Naive thymus-derived CD4-positive, alpha-beta T cell (primary cell): ENCODE measurements at regions of chr12 and their contacts with region 1.

Region 1: GRCh38 chr12:107356266-107356936 is 263.1 kb upstream of the CRY1 start:
- DNase-seq: no peak
- ATAC-seq: no peak
- H3K4me3 ChIP-seq: no peak overlapping the region
- H3K4me3 Mint-ChIP-seq: no peak overlapping the region
- H3K27ac ChIP-seq: no peak overlapping the region
- H3K27ac Mint-ChIP-seq: no peak overlapping the region
- H3K4me1 ChIP-seq: peaks cover 14 to 29% of the 10 kb centered on the region in 2 donors
- H3K4me1 Mint-ChIP-seq: peaks cover 31 to 72% (median 63%) of the 10 kb centered on the region in 7 donors
- H3K27me3 ChIP-seq: no peaks in the 10 kb centered on the region
- H3K27me3 Mint-ChIP-seq: no peaks in the 10 kb centered on the region

Region 2: DNA sequence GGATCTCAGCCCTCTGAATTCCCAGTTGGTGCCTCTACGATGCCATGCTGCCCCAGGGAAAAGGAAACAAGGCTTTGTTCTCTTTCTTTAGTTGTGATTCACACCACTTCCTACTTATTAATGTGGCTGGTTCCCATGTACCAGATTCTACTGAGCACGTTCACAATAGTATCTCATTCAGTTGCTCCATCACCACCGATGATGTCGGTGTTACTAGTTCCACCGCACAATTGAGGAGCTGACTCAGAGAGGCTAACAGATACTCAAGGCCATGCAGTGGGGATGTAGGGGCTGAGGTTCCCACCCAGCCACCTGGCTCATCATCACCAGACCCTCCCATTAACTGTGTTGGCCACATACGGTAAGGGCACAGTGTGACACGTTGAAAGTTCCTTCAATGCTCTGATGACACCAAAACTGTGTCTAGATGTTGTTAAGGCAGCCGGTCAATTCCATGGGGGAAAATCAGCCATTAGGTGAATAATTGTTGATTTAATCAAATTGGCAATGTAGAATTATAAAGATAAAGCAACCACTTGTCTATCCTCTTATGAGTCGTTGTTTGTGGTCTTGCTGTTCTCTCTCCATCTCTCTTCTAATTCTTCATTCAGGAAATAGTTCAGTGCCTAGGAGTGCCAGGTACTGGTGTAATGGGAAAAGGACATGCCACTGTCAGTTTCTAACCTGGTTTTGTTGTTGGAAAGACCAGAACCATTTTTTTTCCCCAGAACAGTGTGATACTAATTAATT is 18.9 kb before region 1 on chr12:
- CTCF ChIA-PET with region 1: no interaction called
- POLR2A ChIA-PET with region 1: no interaction called
- intact Hi-C with region 1: loop called in 1 of 2 experiments (anchors 2 kb)
- DNase-seq: no peak
- ATAC-seq: peak; percentile 53
- H3K4me3 ChIP-seq: no peak overlapping the region
- H3K4me3 Mint-ChIP-seq: peak overlapping the region in 3 of 10 donors; percentile 10 to 25 (median 17)
- H3K27ac ChIP-seq: no peak overlapping the region
- H3K27ac Mint-ChIP-seq: peak overlapping the region in 5 of 9 donors; percentile 14 to 78 (median 34)
- H3K4me1 ChIP-seq: peaks cover 0 to 21% of the 10 kb centered on the region in 2 donors
- H3K4me1 Mint-ChIP-seq: peaks cover 18 to 74% (median 60%) of the 10 kb centered on the region in 7 donors
- H3K27me3 ChIP-seq: no peaks in the 10 kb centered on the region
- H3K27me3 Mint-ChIP-seq: no peaks in the 10 kb centered on the region

Region 3: GRCh38 chr12:107372229-107372658 is 15.8 kb after region 1 on chr12:
- CTCF ChIA-PET with region 1: interaction called, 6 read pairs
- POLR2A ChIA-PET with region 1: interaction called, 6 read pairs
- intact Hi-C with region 1: loop called (anchors 1 to 2 kb)
- DNase-seq: peak in 8 of 9 donors; percentile 37 to 74 (median 68)
- ATAC-seq: peak; percentile 76
- H3K4me3 ChIP-seq: peak overlapping the region; percentile 20
- H3K4me3 Mint-ChIP-seq: peak overlapping the region; percentile 63 to 85 (median 81)
- H3K27ac ChIP-seq: peak overlapping the region; percentile 64
- H3K27ac Mint-ChIP-seq: peak overlapping the region; percentile 88 to 96 (median 94)
- H3K4me1 ChIP-seq: peaks cover 50 to 73% of the 10 kb centered on the region in 2 donors
- H3K4me1 Mint-ChIP-seq: peaks cover 68 to 89% (median 86%) of the 10 kb centered on the region in 7 donors
- H3K27me3 ChIP-seq: no peaks in the 10 kb centered on the region
- H3K27me3 Mint-ChIP-seq: no peaks in the 10 kb centered on the region